H1 (cell line): ENCODE measurements at regions of chr16 and their contacts with region 1.

Region 1: GRCh38 chr16:50368410-50369132 is at the start of gene BRD7:
- DNase-seq: peak in 1 of 2 experiments; percentile 71
- H3K4me3 ChIP-seq: peak within 1 kb of the TSS; percentile 69 to 98 (median 80)
- H3K27ac ChIP-seq: peak within 1 kb of the TSS; percentile 55; the same call in 1 of the 2 replicates
- H3K4me1 ChIP-seq: peaks cover 0 to 6% (median 3%) of the 10 kb centered on the region in 4 experiments; a peak in 4 of 7 replicates
- H3K27me3 ChIP-seq: no peaks in the 10 kb centered on the region
- CTCF ChIP-seq: peak; percentile 38 to 62 (median 59)
- EP300 ChIP-seq: no peak
- POLR2A ChIP-seq: peak in 1 of 2 experiments; percentile 30; a peak in 1 of 3 replicates
- RAD21 ChIP-seq: 0 out of 4 replicates have a peak, but pooled peaks of 1 of the 2 experiments have one; percentile 15
- total RNA-seq, gene BRD7: 119 and 120 TPM in 2 replicates

Region 2: GRCh38 chr16:50354629-50355456 is 13.7 kb before region 1 on chr16:
- CTCF ChIA-PET with region 1: interaction called, 15 read pairs
- POLR2A ChIA-PET with region 1: interaction called, 4 read pairs
- DNase-seq: no peak
- H3K4me3 ChIP-seq: no peak overlapping the region
- H3K27ac ChIP-seq: no peak overlapping the region
- H3K4me1 ChIP-seq: no peaks in the 10 kb centered on the region
- H3K27me3 ChIP-seq: no peaks in the 10 kb centered on the region
- CTCF ChIP-seq: peak in 1 of 3 experiments; percentile 22; a peak in 2 of 4 replicates
- EP300 ChIP-seq: no peak
- POLR2A ChIP-seq: no peak
- RAD21 ChIP-seq: peak in 1 of 2 experiments; percentile 34; a peak in 3 of 4 replicates

Region 3: DNA sequence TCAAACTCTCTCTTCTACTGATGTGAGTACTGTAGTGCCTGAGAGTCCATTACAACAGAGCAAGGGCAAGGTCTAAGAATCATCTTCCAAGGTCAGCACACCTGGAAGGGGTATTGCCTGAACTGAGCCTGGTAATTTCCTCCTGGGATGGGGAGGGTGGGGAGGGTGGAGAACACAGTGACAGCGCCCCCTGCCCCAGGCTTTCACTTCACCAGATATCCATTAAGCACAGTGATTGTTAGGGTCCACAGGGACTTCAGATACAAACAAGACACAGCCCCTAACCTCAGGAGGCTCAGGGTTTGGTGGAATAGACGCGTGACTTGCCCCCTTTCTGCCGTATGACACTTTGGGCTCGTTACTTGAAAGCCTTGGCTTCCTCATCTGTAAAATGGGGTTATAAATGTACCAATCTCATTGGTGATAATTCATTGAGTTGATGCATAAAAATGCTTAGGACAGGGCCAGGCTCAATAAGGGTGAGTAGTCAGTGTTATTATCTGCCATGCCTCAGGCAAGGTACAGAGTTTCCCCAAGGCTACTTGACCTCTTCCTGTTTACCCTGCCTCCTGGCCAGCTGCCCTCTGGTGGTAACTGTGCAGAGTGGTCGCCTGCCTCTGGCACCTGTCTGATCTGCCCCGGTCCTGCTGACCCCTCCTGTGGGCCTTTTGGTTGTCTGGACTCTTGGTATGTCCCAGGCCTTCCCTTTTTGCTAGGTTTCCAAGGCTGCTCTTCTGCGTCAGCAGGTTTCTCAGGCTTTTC is 13.3 kb after region 1 on chr16:
- CTCF ChIA-PET with region 1: interaction called, 31 read pairs
- POLR2A ChIA-PET with region 1: no interaction called
- DNase-seq: no peak
- H3K4me3 ChIP-seq: no peak overlapping the region
- H3K27ac ChIP-seq: no peak overlapping the region
- H3K4me1 ChIP-seq: peaks cover 0 to 5% (median 0%) of the 10 kb centered on the region in 4 experiments; a peak in 1 of 7 replicates
- H3K27me3 ChIP-seq: no peaks in the 10 kb centered on the region
- CTCF ChIP-seq: peak; percentile 70 to 83 (median 79)
- EP300 ChIP-seq: no peak
- POLR2A ChIP-seq: no peak
- RAD21 ChIP-seq: peak; percentile 41 to 62

Region 4: DNA sequence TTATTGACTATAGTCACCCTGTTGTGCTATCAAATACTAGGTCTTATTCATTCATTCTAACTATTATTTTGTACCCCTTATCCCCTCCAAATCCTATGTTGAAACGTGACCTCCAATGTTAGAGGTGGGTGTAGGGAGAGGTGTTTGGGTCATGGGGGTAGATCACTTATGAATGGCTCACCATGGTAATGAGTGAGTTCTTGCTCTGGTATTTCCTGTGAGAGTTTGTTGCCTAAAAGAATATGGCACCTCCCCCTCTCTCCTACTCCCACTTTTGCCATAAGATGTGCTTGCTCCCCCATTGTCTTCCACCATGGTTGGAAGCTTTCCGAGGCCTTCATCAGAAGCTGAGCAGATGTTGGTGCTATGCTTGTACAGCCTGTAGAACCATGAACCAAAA is 59.5 kb after region 1 on chr16:
- CTCF ChIA-PET with region 1: no interaction called
- POLR2A ChIA-PET with region 1: no interaction called
- DNase-seq: no peak
- H3K4me3 ChIP-seq: no peak overlapping the region
- H3K27ac ChIP-seq: no peak overlapping the region
- H3K4me1 ChIP-seq: no peaks in the 10 kb centered on the region
- H3K27me3 ChIP-seq: no peaks in the 10 kb centered on the region
- CTCF ChIP-seq: no peak
- EP300 ChIP-seq: no peak
- POLR2A ChIP-seq: no peak
- RAD21 ChIP-seq: no peak

Region 5: DNA sequence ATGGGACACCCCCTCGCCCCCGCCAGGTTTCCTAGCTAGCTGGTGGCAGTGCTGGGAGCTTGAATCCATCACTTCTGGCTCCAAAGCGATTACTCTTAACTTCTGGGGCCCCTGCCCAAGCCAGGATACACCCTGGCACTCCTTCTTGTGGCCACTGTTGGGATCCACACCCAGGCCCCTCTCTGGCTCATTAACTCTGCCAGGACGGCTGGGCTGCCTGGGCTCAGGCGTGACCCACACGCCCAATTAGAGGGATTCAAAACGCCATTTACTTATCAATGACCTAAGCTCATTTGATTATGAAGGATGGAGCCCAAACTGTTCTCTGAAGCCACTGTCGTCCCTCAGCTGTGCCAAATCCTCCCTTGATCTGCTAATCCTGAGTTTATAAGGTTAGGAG is 79.9 kb after region 1 on chr16:
- CTCF ChIA-PET with region 1: interaction called, 28 read pairs
- POLR2A ChIA-PET with region 1: interaction called, 3 read pairs
- DNase-seq: peak in 1 of 2 experiments; percentile 63
- H3K4me3 ChIP-seq: no peak overlapping the region; a peak in 1 of 8 replicates
- H3K27ac ChIP-seq: no peak overlapping the region
- H3K4me1 ChIP-seq: peaks cover 9 to 30% (median 17%) of the 10 kb centered on the region in 4 experiments; a peak in 6 of 7 replicates
- H3K27me3 ChIP-seq: no peaks in the 10 kb centered on the region; a peak in 1 of 7 replicates
- CTCF ChIP-seq: peak; percentile 62 to 76 (median 67)
- EP300 ChIP-seq: no peak
- POLR2A ChIP-seq: no peak
- RAD21 ChIP-seq: peak; percentile 65 to 75